ENCODE measurements at regions of chr11 and their contacts with region 1.

Region 1: GRCh38 chr11:61775606-61776550 is 16.5 kb downstream of the TMEM258 start:
- DNase-seq: no peak
- H3K27ac ChIP-seq: no peak overlapping the region
- CTCF ChIP-seq: no peak

Region 2: GRCh38 chr11:61747192-61747966 is 28.5 kb before region 1 on chr11:
- CTCF ChIA-PET with region 1: interaction called, 10 read pairs
- POLR2A ChIA-PET with region 1: no interaction called
- DNase-seq: peak; percentile 48
- H3K27ac ChIP-seq: no peak overlapping the region
- CTCF ChIP-seq: peak; percentile 88

Measured in RWPE1 (cell line).